GM12878 (cell line): ENCODE measurements at regions of chr10 and their contacts with region 1.

Region 1: DNA sequence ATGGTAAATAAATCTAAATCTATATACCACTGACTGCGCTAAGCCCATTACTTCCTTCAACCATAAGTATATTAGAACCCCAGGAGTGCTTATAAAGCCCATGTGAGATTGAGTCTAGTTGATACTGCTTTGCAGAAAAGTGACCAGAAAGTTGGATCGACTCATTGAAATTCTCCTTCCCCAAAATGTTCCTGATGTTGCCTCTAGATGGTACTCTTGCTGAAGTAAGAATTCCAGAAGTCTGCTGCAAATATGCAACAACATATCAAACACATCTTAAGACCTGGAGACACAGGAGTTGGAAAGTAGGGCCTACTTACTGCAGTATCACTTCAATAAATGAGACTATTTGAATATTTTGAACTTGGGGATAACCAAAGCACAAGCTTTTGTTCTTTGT is 550.8 kb downstream of the IPMK start:
- DNase-seq: no peak
- ATAC-seq: no peak
- H3K4me3 ChIP-seq: no peak overlapping the region
- H3K27ac ChIP-seq: no peak overlapping the region
- H3K4me1 ChIP-seq: no peaks in the 10 kb centered on the region
- H3K27me3 ChIP-seq: no peaks in the 10 kb centered on the region
- CTCF ChIP-seq: no peak; a peak in 1 of 6 replicates
- EP300 ChIP-seq: no peak
- POLR2A ChIP-seq: no peak
- RAD21 ChIP-seq: no peak

Region 2: DNA sequence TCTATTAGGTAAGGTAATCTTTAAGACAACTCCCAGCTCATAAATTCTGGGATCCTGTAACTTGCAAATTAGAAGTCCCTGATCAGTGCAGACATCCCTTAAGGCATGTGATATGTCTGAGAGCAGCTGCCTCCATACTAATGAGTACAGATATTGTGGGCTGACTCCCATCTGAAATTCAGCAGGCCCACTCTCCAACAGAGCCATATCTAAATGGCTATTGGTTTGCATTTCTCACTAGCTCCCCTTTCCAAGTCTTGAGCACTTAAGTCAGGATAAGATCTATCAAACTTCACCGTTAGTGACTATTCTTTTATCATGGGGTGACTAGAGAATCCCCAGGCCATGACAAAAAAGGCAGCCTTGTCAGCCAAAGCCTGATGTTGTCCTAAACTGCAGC is 234.6 kb before region 1 on chr10:
- CTCF ChIA-PET with region 1: no interaction called
- POLR2A ChIA-PET with region 1: no interaction called
- RAD21 ChIA-PET with region 1: no interaction called
- SMC1A ChIA-PET with region 1: no interaction called
- in situ Hi-C with region 1: no loop called
- intact Hi-C with region 1: no loop called
- DNase-seq: no peak
- ATAC-seq: no peak
- H3K4me3 ChIP-seq: no peak overlapping the region
- H3K27ac ChIP-seq: no peak overlapping the region
- H3K4me1 ChIP-seq: no peaks in the 10 kb centered on the region
- H3K27me3 ChIP-seq: no peaks in the 10 kb centered on the region
- CTCF ChIP-seq: no peak
- EP300 ChIP-seq: no peak
- POLR2A ChIP-seq: no peak
- RAD21 ChIP-seq: no peak

Region 3: GRCh38 chr10:57624066-57624465 is 92.8 kb before region 1 on chr10:
- CTCF ChIA-PET with region 1: no interaction called
- POLR2A ChIA-PET with region 1: no interaction called
- RAD21 ChIA-PET with region 1: no interaction called
- SMC1A ChIA-PET with region 1: no interaction called
- in situ Hi-C with region 1: loop called (anchors 25 kb)
- intact Hi-C with region 1: no loop called
- DNase-seq: no peak
- ATAC-seq: no peak
- H3K4me3 ChIP-seq: no peak overlapping the region
- H3K27ac ChIP-seq: no peak overlapping the region
- H3K4me1 ChIP-seq: no peaks in the 10 kb centered on the region
- H3K27me3 ChIP-seq: no peaks in the 10 kb centered on the region
- CTCF ChIP-seq: no peak
- EP300 ChIP-seq: no peak
- POLR2A ChIP-seq: no peak
- RAD21 ChIP-seq: no peak

Region 4: DNA sequence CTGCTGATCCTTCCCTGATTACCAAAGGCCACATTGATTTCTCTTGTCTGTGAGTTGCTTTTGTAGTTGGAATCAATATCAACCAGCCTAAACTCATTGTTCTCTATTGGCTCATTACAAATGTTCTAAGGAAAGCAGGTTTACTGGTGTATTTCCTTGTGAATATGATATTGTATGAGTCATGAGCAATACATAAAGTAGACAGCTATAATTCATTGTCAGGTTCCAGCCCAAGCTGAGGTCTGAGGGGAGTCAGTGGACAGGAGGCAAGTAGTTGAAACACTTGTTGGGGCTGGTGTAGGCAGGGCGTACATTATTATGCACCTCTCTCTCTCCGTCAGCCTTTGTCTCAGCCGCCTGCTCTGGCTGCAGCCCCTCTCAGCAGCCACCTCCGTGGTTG is 99.1 kb after region 1 on chr10:
- CTCF ChIA-PET with region 1: no interaction called
- POLR2A ChIA-PET with region 1: no interaction called
- RAD21 ChIA-PET with region 1: no interaction called
- SMC1A ChIA-PET with region 1: no interaction called
- in situ Hi-C with region 1: no loop called
- intact Hi-C with region 1: no loop called
- DNase-seq: no peak
- ATAC-seq: no peak
- H3K4me3 ChIP-seq: no peak overlapping the region
- H3K27ac ChIP-seq: no peak overlapping the region
- H3K4me1 ChIP-seq: no peaks in the 10 kb centered on the region
- H3K27me3 ChIP-seq: no peaks in the 10 kb centered on the region
- CTCF ChIP-seq: no peak
- EP300 ChIP-seq: no peak
- POLR2A ChIP-seq: no peak
- RAD21 ChIP-seq: no peak

Region 5: GRCh38 chr10:57849691-57850357 is 132.9 kb after region 1 on chr10:
- CTCF ChIA-PET with region 1: no interaction called
- POLR2A ChIA-PET with region 1: no interaction called
- RAD21 ChIA-PET with region 1: no interaction called
- SMC1A ChIA-PET with region 1: no interaction called
- in situ Hi-C with region 1: no loop called
- intact Hi-C with region 1: loop called (anchors 5 kb)
- DNase-seq: no peak
- ATAC-seq: no peak
- H3K4me3 ChIP-seq: no peak overlapping the region
- H3K27ac ChIP-seq: no peak overlapping the region
- H3K4me1 ChIP-seq: no peaks in the 10 kb centered on the region
- H3K27me3 ChIP-seq: no peaks in the 10 kb centered on the region
- CTCF ChIP-seq: peak in 2 of 3 experiments; percentile 18 to 32; a peak in 1 of 6 replicates
- EP300 ChIP-seq: no peak
- POLR2A ChIP-seq: no peak
- RAD21 ChIP-seq: no peak